ENCODE measurements at regions of chr5 and their contacts with region 1.

Region 1: GRCh38 chr5:141320225-141321169 is at the start of gene TAF7:
- DNase-seq: peak; percentile 82 to 96 (median 89)
- ATAC-seq: peak; percentile 92 to 93 (median 92)
- H3K4me3 ChIP-seq: peak within 1 kb of the TSS; percentile 90 to 98
- H3K4me3 Mint-ChIP-seq: peak within 1 kb of the TSS; percentile 97 to 99 (median 99)
- H3K27ac ChIP-seq: peak within 1 kb of the TSS; percentile 98
- H3K27ac Mint-ChIP-seq: peak within 1 kb of the TSS; percentile 97 to 98
- H3K4me1 ChIP-seq: peaks cover 2 to 19% of the 10 kb centered on the region in 2 experiments
- H3K4me1 Mint-ChIP-seq: peaks cover 30 to 35% (median 33%) of the 10 kb centered on the region in 3 donors
- H3K27me3 ChIP-seq: no peaks in the 10 kb centered on the region
- H3K27me3 Mint-ChIP-seq: peaks cover 2 to 3% of the 10 kb centered on the region in 2 donors
- total RNA-seq, gene TAF7: 83.7 to 103 (median 101) TPM

Region 2: GRCh38 chr5:141050622-141051525 is 269.6 kb before region 1 on chr5 and contains the start of gene PCDHB1:
- CTCF ChIA-PET with region 1: no interaction called
- POLR2A ChIA-PET with region 1: no interaction called
- DNase-seq: no peak
- ATAC-seq: no peak
- H3K4me3 ChIP-seq: peak within 1 kb of the TSS in 1 of 2 donors; percentile 19
- H3K4me3 Mint-ChIP-seq: peak within 1 kb of the TSS; percentile 59 to 65 (median 60)
- H3K27ac ChIP-seq: no peak within 1 kb of the TSS
- H3K27ac Mint-ChIP-seq: no peak within 1 kb of the TSS
- H3K4me1 ChIP-seq: no peaks in the 10 kb centered on the region
- H3K4me1 Mint-ChIP-seq: peaks cover 4 to 14% (median 6%) of the 10 kb centered on the region in 3 donors
- H3K27me3 ChIP-seq: peaks cover 6 to 19% of the 10 kb centered on the region in 2 experiments
- H3K27me3 Mint-ChIP-seq: peaks cover 51 to 55% of the 10 kb centered on the region in 2 donors
- total RNA-seq, gene PCDHB1: not detected

Region 3: DNA sequence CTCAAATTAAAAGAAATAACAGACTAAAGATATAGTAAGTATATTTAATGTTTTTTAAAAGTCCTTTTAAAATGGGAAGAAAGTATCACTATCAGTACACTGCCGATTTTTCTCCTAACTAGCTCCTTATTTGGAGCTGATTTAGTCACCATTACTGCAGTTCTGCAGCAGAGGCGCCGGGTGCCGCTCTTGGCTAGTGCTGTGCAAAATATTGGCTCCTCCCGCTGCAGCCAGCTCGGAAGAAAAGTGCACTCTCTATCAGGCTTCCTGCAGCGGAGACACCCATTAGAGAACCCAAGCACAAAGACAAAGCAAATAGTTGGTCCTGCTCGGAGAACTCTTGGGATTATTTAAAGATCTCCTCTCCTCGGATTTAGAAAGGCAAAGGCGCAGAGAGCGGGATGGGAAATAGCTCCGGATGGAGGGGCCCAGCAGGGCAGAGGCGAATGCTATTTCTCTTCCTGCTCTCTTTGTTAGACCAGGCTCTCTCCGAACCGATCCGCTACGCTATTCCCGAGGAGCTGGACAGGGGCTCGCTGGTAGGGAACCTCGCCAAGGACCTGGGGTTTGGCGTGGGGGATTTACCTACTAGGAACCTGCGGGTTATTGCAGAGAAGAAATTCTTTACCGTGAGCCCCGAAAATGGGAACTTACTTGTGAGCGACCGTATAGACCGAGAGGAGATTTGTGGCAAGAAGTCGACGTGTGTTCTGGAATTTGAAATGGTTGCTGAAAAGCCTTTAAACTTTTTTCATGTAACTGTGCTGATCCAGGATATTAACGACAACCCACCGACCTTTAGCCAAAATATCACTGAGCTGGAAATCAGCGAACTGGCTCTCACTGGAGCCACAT is 49.7 kb after region 1 on chr5 and contains the start of gene PCDHGB3:
- CTCF ChIA-PET with region 1: interaction called, 3 to 12 read pairs
- POLR2A ChIA-PET with region 1: no interaction called
- DNase-seq: peak in 19 of 35 experiments; percentile 6 to 51 (median 25)
- ATAC-seq: peak in 3 of 4 experiments; percentile 52 to 85 (median 82)
- H3K4me3 ChIP-seq: peak within 1 kb of the TSS; percentile 12 to 58
- H3K4me3 Mint-ChIP-seq: peak within 1 kb of the TSS; percentile 66 to 80 (median 77)
- H3K27ac ChIP-seq: no peak within 1 kb of the TSS
- H3K27ac Mint-ChIP-seq: no peak within 1 kb of the TSS
- H3K4me1 ChIP-seq: peaks cover 0 to 7% of the 10 kb centered on the region in 2 experiments
- H3K4me1 Mint-ChIP-seq: peaks cover 7 to 9% (median 8%) of the 10 kb centered on the region in 3 donors
- H3K27me3 ChIP-seq: peaks cover 32 to 61% of the 10 kb centered on the region in 2 experiments
- H3K27me3 Mint-ChIP-seq: peaks cover 56 to 84% of the 10 kb centered on the region in 2 donors
- total RNA-seq, gene PCDHGB3: 0.20 to 0.85 (median 0.41) TPM

Region 4: GRCh38 chr5:141512390-141512910 is 192.0 kb after region 1 on chr5:
- CTCF ChIA-PET with region 1: interaction called in 1 of 2 experiments, 10 read pairs
- POLR2A ChIA-PET with region 1: interaction called in 1 of 2 experiments, 4 read pairs
- DNase-seq: peak; percentile 41 to 88 (median 74)
- ATAC-seq: peak; percentile 45 to 64 (median 53)
- H3K4me3 ChIP-seq: peak overlapping the region; percentile 50 to 86
- H3K4me3 Mint-ChIP-seq: peak overlapping the region; percentile 80 to 91 (median 86)
- H3K27ac ChIP-seq: no peak overlapping the region
- H3K27ac Mint-ChIP-seq: peak overlapping the region; percentile 34 to 80
- H3K4me1 ChIP-seq: peaks cover 3 to 37% of the 10 kb centered on the region in 2 experiments
- H3K4me1 Mint-ChIP-seq: peaks cover 27 to 41% (median 33%) of the 10 kb centered on the region in 3 donors
- H3K27me3 ChIP-seq: peaks cover 0 to 3% of the 10 kb centered on the region in 2 experiments
- H3K27me3 Mint-ChIP-seq: no peaks in the 10 kb centered on the region

Region 5: DNA sequence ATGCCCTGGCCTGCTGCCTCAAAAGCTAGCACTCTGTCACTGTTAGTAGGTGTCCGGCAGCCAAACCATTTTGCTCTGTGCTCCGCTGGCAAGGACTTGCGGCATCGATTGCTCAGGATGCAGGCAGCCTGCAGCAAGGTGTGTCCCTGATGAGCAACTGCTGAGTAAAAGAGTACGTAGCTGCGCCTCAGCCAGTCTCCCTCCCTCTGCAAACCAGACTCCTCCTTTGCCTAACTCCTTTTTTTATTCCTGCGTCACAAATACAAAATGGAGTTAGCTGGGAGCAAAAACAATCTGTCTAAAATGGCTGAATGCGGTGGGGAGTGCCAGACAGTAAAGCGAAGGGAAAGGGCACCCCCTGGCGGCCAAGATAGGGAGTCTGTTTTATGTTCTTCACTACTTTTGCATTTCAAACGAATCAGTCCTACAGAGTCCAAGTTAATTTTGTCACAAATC is 237.2 kb after region 1 on chr5:
- CTCF ChIA-PET with region 1: interaction called, 5 to 19 read pairs
- POLR2A ChIA-PET with region 1: interaction called in 1 of 2 experiments, 4 read pairs
- DNase-seq: peak; percentile 40 to 89 (median 72)
- ATAC-seq: peak; percentile 67 to 84 (median 72)
- H3K4me3 ChIP-seq: no peak overlapping the region
- H3K4me3 Mint-ChIP-seq: no peak overlapping the region
- H3K27ac ChIP-seq: peak overlapping the region; percentile 49
- H3K27ac Mint-ChIP-seq: peak overlapping the region; percentile 76 to 81
- H3K4me1 ChIP-seq: peaks cover 4 to 11% of the 10 kb centered on the region in 2 experiments
- H3K4me1 Mint-ChIP-seq: peaks cover 29 to 36% (median 29%) of the 10 kb centered on the region in 3 donors
- H3K27me3 ChIP-seq: no peaks in the 10 kb centered on the region
- H3K27me3 Mint-ChIP-seq: no peaks in the 10 kb centered on the region

Measured in T-cell (primary cell).